GM13976 (cell line): ENCODE measurements at regions of chr6 and their contacts with region 1.

Region 1: GRCh38 chr6:11374036-11375010 is 141.9 kb upstream of the NEDD9 start:
- DNase-seq: peak; percentile 67
- CTCF ChIP-seq: no peak

Region 2: DNA sequence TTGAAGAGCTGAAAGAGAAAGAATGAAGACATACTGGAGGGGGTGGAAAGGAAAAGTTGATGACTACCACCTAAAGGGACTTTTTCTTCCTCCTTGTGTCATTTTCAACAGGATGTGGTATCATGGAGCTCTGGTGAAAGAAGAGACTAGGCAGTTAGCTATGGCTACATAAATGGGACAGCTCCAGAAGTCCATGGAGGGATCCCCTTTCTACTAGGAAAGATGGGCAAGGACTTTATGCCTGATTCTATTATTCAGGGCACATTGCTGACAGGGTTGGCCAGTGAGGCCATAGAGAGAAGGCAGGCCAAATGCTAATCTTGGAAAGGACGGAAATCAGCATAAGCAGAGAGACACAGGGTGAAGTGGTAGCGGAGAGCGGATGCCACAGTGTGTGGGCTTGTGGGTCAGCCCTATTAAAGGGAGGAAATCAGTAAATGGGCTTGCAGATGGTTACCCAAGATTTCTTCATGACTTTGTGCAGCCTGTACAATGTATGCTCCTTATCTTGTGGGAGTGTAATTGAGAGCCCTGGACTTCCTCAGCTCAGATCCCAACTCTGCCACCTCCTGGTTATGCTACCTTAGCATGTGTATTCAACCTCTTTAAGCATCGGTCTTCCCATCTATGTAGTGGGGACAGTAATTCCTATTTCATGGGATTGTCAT is 85.8 kb after region 1 on chr6:
- in situ Hi-C with region 1: loop called (anchors 10 kb)
- DNase-seq: no peak
- CTCF ChIP-seq: peak; percentile 8